Pancreas (tissue), 10 donors: ENCODE measurements at regions of chr14 and their contacts with region 1.

Region 1: DNA sequence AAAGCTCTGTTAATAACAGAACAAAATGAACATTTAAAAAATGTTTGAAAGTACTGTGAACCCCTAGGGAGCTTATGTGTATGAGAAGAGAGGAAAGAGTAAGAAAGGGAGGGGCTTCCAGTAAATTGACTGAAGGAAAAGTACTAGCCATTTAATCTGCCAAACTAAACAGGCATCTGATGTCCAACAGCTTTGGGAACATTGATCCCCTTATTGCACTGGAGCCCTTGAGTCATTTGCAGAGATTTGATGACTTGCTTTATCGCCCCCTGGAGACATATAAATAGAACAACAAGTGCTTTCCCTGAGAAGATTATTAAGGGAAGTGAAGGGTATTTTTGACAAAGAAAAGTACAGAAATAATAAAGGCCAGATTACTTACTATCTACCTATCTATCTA is 319.3 kb upstream of the NOVA1 start:
- DNase-seq: no peak
- ATAC-seq: peak in 3 of 4 donors; percentile 80 to 87 (median 82)
- H3K4me3 ChIP-seq: no peak overlapping the region
- H3K27ac ChIP-seq: no peak overlapping the region
- H3K4me1 ChIP-seq: no peaks in the 10 kb centered on the region
- H3K27me3 ChIP-seq: no peaks in the 10 kb centered on the region
- CTCF ChIP-seq: peak in 1 of 4 donors; percentile 33

Region 2: DNA sequence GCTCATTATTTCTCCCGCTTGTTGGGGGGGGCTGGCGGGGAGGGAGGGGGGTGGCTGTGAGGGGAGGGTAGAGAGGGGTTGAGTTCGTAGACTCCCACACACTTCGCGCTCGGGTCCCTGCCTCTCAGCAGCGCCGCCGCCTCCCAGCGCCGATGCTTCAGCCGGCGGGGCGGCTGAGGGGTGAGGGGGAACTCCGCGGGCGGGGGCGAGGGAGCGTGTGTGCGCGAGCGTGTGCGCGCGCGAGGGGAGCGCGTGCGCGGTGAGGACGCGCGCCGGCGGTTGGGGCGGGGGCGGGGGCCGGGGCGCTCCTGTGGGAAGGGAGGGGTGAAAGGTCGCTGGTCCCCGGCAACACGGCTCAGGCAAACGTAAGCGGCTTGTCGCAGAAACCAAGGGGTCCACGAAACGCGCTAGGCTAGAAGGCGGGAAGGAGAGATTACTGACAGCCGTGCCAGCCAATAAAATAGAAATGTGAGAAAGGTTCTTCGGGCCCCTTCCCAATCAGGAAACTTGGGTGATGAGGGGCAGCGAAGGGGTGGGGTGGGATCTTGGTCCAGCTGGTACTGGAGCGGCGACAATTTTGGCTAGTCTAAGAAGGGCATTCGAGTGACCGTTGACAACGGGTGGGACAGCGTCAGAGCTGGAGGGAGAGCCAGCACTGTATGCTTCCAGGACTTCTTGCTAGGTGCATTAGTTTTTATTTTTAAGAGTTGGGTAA is 318.8 kb before region 1 on chr14:
- intact Hi-C with region 1: loop called in 1 of 3 experiments (anchors 5 kb)
- DNase-seq: peak; percentile 62 to 88 (median 82)
- ATAC-seq: peak; percentile 82 to 92 (median 90)
- H3K4me3 ChIP-seq: peak overlapping the region; percentile 37 to 57 (median 49)
- H3K27ac ChIP-seq: peak overlapping the region in 3 of 4 donors; percentile 46 to 63 (median 49)
- H3K4me1 ChIP-seq: no peaks in the 10 kb centered on the region
- H3K27me3 ChIP-seq: peaks cover 0 to 4% (median 0%) of the 10 kb centered on the region in 4 donors
- CTCF ChIP-seq: no peak

Region 3: DNA sequence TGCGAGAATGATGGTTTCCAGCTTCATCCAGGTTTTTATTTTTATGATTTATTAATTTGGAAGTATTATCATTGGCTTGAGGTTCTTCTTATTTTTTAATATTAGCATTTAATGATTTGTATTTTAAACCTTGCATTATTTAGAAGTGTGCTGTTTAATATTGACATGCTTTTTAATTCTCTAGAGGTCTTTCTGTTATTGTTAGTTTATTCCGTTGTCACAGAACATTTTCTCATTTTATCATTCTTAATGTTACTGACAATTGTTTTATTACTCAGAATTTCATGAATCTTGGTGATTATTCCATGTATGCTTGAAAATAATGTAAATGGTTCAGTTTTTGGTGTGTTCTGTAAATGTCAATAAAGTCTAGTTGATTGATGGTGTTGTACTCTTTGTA is 144.2 kb after region 1 on chr14:
- intact Hi-C with region 1: no loop called
- DNase-seq: no peak
- ATAC-seq: no peak
- H3K4me3 ChIP-seq: no peak overlapping the region
- H3K27ac ChIP-seq: no peak overlapping the region
- H3K4me1 ChIP-seq: no peaks in the 10 kb centered on the region
- H3K27me3 ChIP-seq: no peaks in the 10 kb centered on the region
- CTCF ChIP-seq: no peak